Ovary (tissue), 10 donors: ENCODE measurements at regions of chr2 and their contacts with region 1.

Region 1: DNA sequence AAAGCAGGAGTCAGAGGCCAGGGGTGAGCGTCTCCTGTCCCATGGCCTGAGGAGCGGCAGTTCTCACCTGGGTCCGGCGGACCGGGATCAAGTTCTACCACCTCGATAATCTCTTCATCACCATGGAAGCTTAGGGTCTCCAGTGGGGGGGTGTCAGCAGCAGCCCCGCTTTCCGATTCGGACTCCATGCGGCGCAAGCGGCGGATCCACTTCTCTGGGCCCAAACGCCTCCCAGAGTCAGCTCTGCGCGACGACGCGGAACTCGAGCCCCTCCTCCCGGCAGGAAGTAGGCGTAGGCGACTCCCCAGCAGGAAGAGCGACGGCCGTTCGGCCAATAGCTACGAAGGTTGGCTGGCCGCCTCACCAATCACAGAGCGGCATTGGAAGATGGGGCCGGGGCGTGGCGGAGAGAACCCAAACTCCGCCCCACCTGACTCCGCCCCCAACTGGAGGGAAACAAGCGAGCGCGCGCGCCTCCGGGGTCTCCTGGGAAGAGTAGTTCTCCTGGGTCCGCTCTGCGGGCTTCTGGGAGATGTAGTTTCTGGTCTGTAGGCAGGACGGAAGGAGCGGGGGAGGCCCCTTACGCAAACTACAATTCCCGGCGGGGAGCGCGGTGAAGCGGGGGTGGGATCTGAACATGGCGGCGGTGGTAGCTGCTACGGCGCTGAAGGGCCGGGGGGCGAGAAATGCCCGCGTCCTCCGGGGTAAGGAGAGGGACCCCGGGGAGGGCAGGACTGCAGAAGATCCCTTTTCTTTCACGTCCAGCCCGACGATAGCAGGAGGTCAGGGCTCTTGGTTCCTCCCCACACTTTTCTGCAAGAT is at the starts of genes AAMP and PNKD:
- DNase-seq: peak; percentile 100
- H3K4me3 ChIP-seq: peak within 1 kb of the TSS; percentile 90
- H3K27ac ChIP-seq: peak within 1 kb of the TSS in 1 of 2 donors; percentile 56
- H3K4me1 ChIP-seq: peaks cover 10% of the 10 kb centered on the region
- H3K27me3 ChIP-seq: no peaks in the 10 kb centered on the region
- CTCF ChIP-seq: peak in 1 of 3 donors; percentile 44
- EP300 ChIP-seq: no peak
- POLR2A ChIP-seq: peak; percentile 87
- total RNA-seq, gene AAMP: 86.5 to 123 (median 106) TPM
- total RNA-seq, gene PNKD: 37.3 to 59.6 (median 48.1) TPM

Region 2: DNA sequence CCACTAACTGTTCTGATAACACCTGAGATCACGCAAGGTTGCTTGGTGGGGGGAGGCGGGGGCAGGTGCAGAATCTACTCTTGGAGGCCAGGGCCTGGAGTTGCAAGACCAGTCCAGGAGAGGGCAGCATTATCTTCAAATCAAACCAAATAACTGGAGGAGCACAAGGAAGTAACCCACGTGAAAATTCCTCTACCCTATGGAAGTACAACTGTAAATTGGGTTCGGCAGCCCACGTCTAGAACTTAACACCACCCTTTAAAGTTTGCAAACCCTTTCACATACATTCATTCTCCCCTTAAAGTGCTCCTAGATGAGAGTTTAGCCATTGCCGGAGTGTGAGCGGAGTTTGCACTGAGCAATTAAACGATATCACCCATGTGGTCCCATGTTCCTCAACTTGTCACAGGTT is 83.7 kb before region 1 on chr2:
- intact Hi-C with region 1: loop called in 2 of 4 experiments (anchors 5 kb)
- DNase-seq: peak; percentile 38 to 74 (median 62)
- H3K4me3 ChIP-seq: no peak overlapping the region
- H3K27ac ChIP-seq: no peak overlapping the region
- H3K4me1 ChIP-seq: no peaks in the 10 kb centered on the region
- H3K27me3 ChIP-seq: no peaks in the 10 kb centered on the region
- CTCF ChIP-seq: peak; percentile 33 to 68 (median 55)
- EP300 ChIP-seq: no peak
- POLR2A ChIP-seq: no peak

Region 3: DNA sequence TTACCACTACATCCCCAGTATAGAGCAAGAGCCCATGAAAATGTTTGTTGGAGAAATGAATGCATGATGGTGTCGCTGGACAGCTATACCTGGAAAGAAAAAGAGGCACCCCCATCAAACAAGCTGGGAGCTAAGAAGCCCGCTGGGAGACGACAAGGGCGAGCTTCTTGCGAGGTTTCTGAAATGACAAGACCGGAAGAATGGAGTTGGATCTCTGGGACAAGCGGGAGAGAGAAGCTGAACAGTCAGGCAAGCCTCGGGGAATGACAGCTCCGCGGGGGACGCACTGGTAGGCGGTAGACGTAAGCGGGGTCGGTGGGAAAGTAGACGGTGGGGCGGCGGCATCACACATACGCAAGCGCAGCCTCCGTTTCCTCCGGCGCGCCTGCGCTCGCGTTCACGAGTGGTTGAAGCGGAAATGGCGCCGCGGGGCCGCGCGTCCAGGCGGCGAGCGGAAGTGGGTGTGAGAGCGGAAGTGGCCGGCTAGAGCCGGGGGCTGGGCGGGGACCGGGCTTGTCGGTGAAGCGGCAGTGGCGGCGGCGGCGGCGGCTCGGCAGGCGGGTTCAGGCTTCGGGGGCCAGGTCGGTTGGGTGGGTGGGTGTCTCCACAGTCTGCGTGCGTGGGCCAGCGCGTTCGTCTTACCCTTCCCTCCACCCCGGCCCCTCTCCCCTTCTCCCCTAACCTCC is 53.3 kb before region 1 on chr2 and contains the start of gene ARPC2:
- intact Hi-C with region 1: loop called in 1 of 4 experiments (anchors 5 kb)
- DNase-seq: peak; percentile 92 to 97 (median 93)
- H3K4me3 ChIP-seq: peak within 1 kb of the TSS; percentile 81
- H3K27ac ChIP-seq: peak within 1 kb of the TSS; percentile 72 to 90
- H3K4me1 ChIP-seq: peaks cover 8% of the 10 kb centered on the region
- H3K27me3 ChIP-seq: no peaks in the 10 kb centered on the region
- CTCF ChIP-seq: peak; percentile 34 to 77 (median 65)
- EP300 ChIP-seq: no peak
- POLR2A ChIP-seq: peak; percentile 93
- total RNA-seq, gene ARPC2: 135 to 229 (median 166) TPM

Region 4: DNA sequence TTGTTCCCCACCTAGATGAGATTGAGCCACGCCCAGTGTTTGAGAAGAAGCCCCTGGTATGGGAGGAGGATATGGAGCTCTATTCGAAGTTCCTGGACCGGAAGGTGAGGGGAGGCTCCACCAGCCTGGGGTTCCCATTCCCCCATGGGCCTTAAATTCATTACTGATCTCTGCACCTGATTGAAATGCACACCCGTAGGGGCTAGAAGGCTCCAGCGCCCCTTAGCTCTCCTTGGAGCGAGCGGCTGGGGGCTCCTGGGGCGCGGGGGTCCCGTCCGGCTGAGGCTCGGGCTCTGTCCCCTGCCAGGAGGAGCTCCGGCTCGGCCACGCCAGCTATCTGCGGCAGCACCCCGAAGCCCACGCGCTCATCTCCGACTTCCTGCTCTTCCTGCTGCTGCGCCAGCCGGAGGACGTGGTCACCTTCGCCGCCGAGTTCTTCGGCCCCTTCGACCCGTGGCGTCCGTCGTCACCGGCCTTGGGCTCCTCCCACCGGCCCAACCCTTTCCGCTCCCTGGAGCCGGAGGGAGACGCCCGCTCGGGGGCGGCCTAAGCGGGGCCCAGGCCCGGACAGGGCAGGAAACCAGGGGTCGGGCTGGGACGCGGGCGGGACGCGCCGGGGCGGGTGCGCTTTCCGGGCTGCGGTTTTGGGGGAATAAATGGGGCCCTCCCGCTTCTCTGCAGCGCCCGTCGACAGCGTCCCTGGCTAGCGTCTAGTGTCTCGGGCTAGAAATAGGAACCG is 97.5 kb after region 1 on chr2:
- intact Hi-C with region 1: no loop called
- DNase-seq: peak; percentile 88 to 91 (median 89)
- H3K4me3 ChIP-seq: peak overlapping the region; percentile 53
- H3K27ac ChIP-seq: peak overlapping the region; percentile 34 to 90
- H3K4me1 ChIP-seq: peaks cover 4% of the 10 kb centered on the region
- H3K27me3 ChIP-seq: no peaks in the 10 kb centered on the region
- CTCF ChIP-seq: no peak
- EP300 ChIP-seq: no peak
- POLR2A ChIP-seq: peak; percentile 89

Region 5: DNA sequence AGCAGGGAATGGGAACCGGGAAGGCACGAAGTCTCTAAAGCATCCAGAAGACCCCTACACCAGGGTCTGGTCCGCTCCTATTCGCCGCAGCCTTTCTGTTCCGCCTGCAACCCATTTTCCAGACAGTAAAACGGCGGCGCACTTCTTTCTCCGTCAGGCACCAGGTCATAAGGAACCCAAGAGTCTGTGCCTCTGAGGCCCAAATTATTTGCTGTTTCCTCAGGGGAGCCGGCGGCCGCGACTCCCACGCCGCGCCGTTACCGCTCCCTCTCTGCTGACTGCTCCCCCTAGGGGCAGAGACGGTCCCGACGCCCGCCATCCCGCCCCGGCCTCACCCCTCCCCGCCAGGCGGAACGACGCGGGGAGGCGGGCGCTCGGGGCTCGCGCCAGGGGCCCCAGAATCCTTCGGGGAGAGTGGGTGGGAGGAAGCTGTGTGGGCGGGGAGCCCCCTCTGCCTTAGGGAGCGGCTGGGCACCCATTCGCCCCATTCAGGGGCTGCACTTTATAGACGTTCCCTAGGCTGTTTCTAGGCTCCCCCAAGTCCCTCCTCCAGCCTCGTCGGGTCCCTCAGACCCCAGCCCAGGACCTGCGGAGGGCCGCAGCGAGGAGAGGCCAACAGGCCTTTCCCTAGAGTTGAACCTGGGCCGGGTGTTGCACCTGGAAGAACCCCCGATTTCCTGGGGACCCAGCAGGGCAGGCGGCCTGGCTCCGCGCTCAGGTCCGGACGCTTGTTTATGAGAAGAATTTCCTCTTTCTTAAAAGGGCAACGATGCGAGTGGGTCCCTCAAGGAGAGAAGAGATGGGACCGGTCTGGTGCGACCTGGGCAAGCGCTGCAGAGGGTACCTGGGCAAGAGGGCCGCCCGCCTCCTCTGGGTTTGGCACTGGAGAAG is 125.9 kb after region 1 on chr2:
- intact Hi-C with region 1: loop called in 1 of 4 experiments (anchors 2 kb)
- DNase-seq: peak; percentile 96 to 97 (median 97)
- H3K4me3 ChIP-seq: peak overlapping the region; percentile 99
- H3K27ac ChIP-seq: peak overlapping the region; percentile 97 to 98
- H3K4me1 ChIP-seq: peaks cover 5% of the 10 kb centered on the region
- H3K27me3 ChIP-seq: no peaks in the 10 kb centered on the region
- CTCF ChIP-seq: peak; percentile 92 to 98 (median 95)
- EP300 ChIP-seq: no peak
- POLR2A ChIP-seq: peak; percentile 55

Region 6: DNA sequence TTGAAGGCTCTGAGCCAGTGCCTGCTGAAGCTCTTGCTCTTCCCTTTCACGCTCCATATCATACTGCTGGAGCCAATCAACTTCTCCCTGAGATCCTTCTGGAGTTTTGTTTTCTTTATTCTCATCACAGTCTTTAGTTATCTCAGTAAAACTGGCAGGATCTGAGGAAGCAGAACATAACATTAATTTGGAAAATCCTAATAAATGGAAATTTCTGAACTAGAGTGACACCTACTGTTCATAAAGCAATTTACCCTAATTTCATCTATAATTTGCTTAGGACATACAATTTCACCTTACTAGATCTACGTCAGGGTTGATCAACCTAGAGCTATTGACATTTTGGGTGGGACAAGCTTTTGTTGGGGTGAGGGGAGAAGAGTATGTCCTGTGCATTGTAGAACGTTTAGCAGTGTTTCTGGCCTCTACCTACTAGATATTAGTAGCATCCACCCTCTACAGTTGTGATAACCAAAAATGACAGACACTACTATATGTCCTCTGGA is 196.0 kb after region 1 on chr2:
- intact Hi-C with region 1: loop called in 1 of 4 experiments (anchors 10 kb)
- DNase-seq: no peak
- H3K4me3 ChIP-seq: no peak overlapping the region
- H3K27ac ChIP-seq: no peak overlapping the region
- H3K4me1 ChIP-seq: no peaks in the 10 kb centered on the region
- H3K27me3 ChIP-seq: no peaks in the 10 kb centered on the region
- CTCF ChIP-seq: peak in 2 of 3 donors; percentile 6 to 41
- EP300 ChIP-seq: no peak
- POLR2A ChIP-seq: no peak

Region 7: GRCh38 chr2:218659258-218659987 is 389.3 kb after region 1 on chr2 and contains the starts of genes BCS1L and ZNF142:
- intact Hi-C with region 1: loop called in 1 of 4 experiments (anchors 10 kb)
- DNase-seq: peak; percentile 82 to 91 (median 83)
- H3K4me3 ChIP-seq: peak within 1 kb of the TSS; percentile 97
- H3K27ac ChIP-seq: no peak within 1 kb of the TSS
- H3K4me1 ChIP-seq: peaks cover 7% of the 10 kb centered on the region
- H3K27me3 ChIP-seq: no peaks in the 10 kb centered on the region
- CTCF ChIP-seq: no peak
- EP300 ChIP-seq: no peak
- POLR2A ChIP-seq: no peak
- total RNA-seq, gene BCS1L: 14.7 to 45.2 (median 35.0) TPM
- total RNA-seq, gene ZNF142: 10.9 to 33.9 (median 24.0) TPM